AG04450 (cell line): ENCODE measurements at regions of chr12 and their contacts with region 1.

Region 1: DNA sequence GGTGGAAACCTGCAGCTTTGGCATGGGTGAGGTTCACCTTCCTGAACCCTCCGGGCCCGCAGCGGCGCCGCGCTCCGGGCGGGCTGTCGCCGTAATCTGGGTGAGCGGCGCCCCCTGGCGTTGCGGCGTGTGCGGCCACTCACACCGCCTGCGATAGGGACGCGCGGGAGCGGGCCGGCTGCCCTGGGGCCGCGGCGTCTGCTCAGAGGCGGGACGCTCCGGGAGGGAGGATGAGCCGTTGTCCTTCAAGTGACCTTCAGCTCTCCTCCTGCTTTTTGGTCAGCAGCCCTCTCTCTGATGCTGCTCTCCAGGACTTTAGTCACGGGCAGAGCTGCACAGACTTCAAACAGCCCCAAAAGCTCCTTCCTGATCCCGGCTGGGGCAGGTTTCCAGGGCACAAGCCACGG is 211.7 kb upstream of the FKBP4 start:
- DNase-seq: no peak
- H3K4me3 ChIP-seq: no peak overlapping the region
- H3K27ac ChIP-seq: no peak overlapping the region
- H3K27me3 ChIP-seq: no peaks in the 10 kb centered on the region
- CTCF ChIP-seq: peak; percentile 74

Region 2: GRCh38 chr12:2057041-2057794 is 525.9 kb before region 1 on chr12:
- CTCF ChIA-PET with region 1: interaction called, 10 read pairs
- POLR2A ChIA-PET with region 1: interaction called, 3 read pairs
- DNase-seq: no peak
- H3K4me3 ChIP-seq: no peak overlapping the region
- H3K27ac ChIP-seq: no peak overlapping the region
- H3K27me3 ChIP-seq: no peaks in the 10 kb centered on the region
- CTCF ChIP-seq: peak; percentile 86

Region 3: DNA sequence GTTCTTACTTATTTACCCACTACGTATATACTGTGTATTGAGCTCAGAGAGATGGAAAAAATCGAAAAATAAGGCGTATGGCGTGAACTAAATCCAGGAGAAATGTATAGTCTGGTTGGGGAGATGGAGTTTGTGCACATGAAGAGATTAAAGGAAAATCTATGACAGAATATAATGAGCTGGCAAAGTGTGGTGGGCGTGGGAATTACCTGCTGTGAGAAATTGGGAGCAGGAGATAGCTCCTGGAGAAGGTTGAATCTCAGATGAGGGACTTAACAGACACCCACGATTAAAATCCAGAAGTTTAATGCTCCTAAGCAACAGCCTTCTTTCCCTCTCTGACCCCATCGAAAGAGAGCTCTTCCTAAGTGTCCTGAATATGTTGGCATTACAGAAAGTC is 12.5 kb before region 1 on chr12:
- CTCF ChIA-PET with region 1: interaction called, 11 read pairs
- POLR2A ChIA-PET with region 1: no interaction called
- DNase-seq: no peak
- H3K4me3 ChIP-seq: no peak overlapping the region
- H3K27ac ChIP-seq: no peak overlapping the region
- H3K27me3 ChIP-seq: peaks cover 3% of the 10 kb centered on the region
- CTCF ChIP-seq: no peak